Endothelial cell of umbilical vein (primary cell): ENCODE measurements at regions of chr14 and their contacts with region 1.

Region 1: DNA sequence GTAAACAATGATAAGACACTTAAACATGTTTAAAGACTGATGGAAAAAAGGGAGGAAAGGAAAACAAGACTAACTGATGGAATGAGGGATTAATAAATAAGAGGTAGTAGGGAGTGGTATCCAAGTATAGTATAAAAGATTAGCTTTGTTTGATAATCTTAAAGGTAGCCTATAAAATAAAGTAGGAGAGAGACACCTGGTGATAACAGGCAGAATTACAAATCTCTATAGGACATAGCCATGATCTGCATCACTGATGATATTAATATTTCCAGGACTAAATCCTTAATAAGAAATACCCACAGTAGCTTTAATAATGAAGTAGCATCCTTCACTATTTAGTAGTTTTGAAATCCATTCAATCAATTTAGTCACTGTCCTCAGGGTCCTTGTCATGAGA is 30.4 kb downstream of the DLGAP5 start:
- DNase-seq: peak; percentile 57
- H3K4me3 ChIP-seq: no peak overlapping the region
- H3K27ac ChIP-seq: no peak overlapping the region
- H3K4me1 ChIP-seq: no peaks in the 10 kb centered on the region
- H3K27me3 ChIP-seq: no peaks in the 10 kb centered on the region
- CTCF ChIP-seq: peak in 1 of 2 donors; percentile 21
- POLR2A ChIP-seq: no peak

Region 2: GRCh38 chr14:55051426-55052268 is 109.3 kb before region 1 on chr14 and contains the start of gene MAPK1IP1L:
- CTCF ChIA-PET with region 1: interaction called, 24 read pairs
- POLR2A ChIA-PET with region 1: no interaction called
- dilution Hi-C with region 1: no loop called
- intact Hi-C with region 1: no loop called
- DNase-seq: peak; percentile 95
- H3K4me3 ChIP-seq: peak within 1 kb of the TSS; percentile 33 to 85 (median 78)
- H3K27ac ChIP-seq: peak within 1 kb of the TSS; percentile 100
- H3K4me1 ChIP-seq: peaks cover 17% of the 10 kb centered on the region
- H3K27me3 ChIP-seq: no peaks in the 10 kb centered on the region
- CTCF ChIP-seq: peak; percentile 95 to 100
- POLR2A ChIP-seq: peak; percentile 98
- total RNA-seq, gene MAPK1IP1L: 129 and 139 TPM in 2 replicates

Region 3: DNA sequence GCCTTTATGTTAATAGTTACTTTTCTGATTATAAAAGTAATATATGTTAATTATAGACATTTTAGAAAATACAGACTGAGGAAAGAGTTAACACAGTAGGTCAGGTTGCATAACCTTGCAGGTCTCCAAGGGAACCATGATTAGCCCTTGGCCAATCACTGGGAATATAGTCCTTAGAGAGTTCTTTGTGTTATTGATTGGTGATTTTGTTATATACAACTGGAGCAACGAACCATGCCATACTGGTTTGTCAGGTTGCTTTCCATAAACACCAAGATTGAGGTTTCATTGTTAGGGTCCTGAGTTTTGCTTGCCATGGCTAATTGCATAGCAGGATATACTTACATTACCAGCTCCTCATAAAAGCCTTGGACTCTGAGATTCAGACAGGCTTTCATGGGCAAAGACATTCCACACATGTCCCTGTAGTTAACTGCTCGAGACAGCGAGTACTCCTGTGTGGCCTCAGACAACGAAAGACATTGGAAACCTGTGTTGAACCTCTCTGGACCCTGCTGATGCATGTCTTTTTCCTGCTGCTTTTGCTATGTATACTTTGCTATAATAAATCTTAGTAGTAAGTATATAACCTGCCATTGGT is 75.8 kb before region 1 on chr14:
- CTCF ChIA-PET with region 1: interaction called, 187 read pairs
- POLR2A ChIA-PET with region 1: no interaction called
- dilution Hi-C with region 1: no loop called
- intact Hi-C with region 1: loop called (anchors 1 kb)
- DNase-seq: no peak
- H3K4me3 ChIP-seq: no peak overlapping the region
- H3K27ac ChIP-seq: no peak overlapping the region
- H3K4me1 ChIP-seq: no peaks in the 10 kb centered on the region
- H3K27me3 ChIP-seq: peaks cover 0 to 3% of the 10 kb centered on the region in 2 experiments
- CTCF ChIP-seq: no peak
- POLR2A ChIP-seq: no peak

Region 4: GRCh38 chr14:55102141-55102621 is 58.8 kb before region 1 on chr14:
- CTCF ChIA-PET with region 1: interaction called, 24 read pairs
- POLR2A ChIA-PET with region 1: interaction called, 3 read pairs
- dilution Hi-C with region 1: no loop called
- intact Hi-C with region 1: no loop called
- DNase-seq: peak; percentile 98
- H3K4me3 ChIP-seq: no peak overlapping the region
- H3K27ac ChIP-seq: peak overlapping the region; percentile 98
- H3K4me1 ChIP-seq: peaks cover 26% of the 10 kb centered on the region
- H3K27me3 ChIP-seq: no peaks in the 10 kb centered on the region
- CTCF ChIP-seq: no peak
- POLR2A ChIP-seq: peak; percentile 58

Region 5: DNA sequence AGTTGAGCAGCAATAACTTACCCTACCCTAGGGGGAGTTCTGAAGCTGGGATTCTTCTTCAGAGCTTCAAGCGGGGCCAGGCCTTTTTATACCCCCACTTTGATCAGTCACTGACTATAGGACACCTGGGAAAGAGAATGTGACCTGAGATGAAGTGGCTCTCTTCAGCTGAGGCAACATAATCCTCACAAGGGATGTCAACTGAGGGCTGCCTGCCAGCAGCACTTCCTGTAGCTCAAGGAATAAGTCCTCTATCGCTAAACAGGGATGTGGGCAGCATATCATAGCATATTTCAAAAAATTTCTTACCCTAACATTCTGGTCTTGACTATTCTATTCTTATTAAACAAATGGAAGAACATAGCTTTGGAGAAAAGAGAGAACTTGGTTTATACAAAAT is 14.6 kb before region 1 on chr14:
- CTCF ChIA-PET with region 1: interaction called, 16 read pairs
- POLR2A ChIA-PET with region 1: no interaction called
- dilution Hi-C with region 1: no loop called
- intact Hi-C with region 1: no loop called
- DNase-seq: no peak
- H3K4me3 ChIP-seq: no peak overlapping the region
- H3K27ac ChIP-seq: no peak overlapping the region
- H3K4me1 ChIP-seq: no peaks in the 10 kb centered on the region
- H3K27me3 ChIP-seq: no peaks in the 10 kb centered on the region
- CTCF ChIP-seq: no peak
- POLR2A ChIP-seq: no peak